ACHN (cell line): ENCODE measurements at regions of chr1 and their contacts with region 1.

Region 1: DNA sequence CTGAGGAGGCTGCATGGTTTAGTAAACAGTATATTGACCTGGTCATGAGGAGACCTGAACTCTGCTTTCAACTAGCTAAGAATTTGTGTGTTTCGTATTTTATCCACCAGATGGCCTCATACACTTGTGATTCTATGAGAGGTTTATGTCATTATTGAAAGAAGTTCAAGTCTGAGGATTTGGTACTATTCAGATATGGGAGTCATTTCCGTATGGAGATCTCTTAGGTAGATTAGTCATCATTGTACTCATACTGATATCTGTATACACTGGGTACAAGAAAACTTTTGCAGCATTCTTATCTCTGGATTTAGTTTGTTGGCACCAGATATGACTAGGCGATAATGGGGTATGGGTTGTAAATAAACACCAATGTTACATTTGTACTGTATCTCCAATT is 26.6 kb downstream of the ATF6 start:
- DNase-seq: peak; percentile 85

Region 2: DNA sequence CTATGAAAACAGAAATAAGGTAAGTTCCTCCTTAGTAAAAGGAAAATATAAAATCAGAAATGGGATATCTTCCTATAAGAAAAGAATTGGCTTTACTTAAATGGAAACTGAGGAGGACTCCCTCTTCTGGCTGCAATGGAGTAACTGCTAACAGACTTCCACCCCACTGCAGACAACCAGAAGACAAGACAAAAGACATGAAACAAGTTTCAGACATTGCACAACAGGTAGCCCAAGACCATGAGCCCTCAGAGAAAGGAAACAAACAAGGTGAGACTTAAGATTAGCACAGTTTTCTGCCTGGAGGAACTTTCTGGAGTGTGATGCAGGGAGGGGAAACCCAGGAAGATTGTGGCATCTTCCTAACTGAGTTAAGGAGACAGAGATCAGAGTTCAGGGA is 247.9 kb after region 1 on chr1:
- in situ Hi-C with region 1: loop called (anchors 25 kb)
- DNase-seq: peak; percentile 28